ENCODE measurements at regions of chr14 and their contacts with region 1.

Region 1: GRCh38 chr14:26794731-26795130 is 196.9 kb upstream of the NOVA1 start:
- DNase-seq: no peak
- H3K4me3 ChIP-seq: no peak overlapping the region
- H3K27ac ChIP-seq: no peak overlapping the region
- H3K4me1 ChIP-seq: no peaks in the 10 kb centered on the region
- H3K27me3 ChIP-seq: no peaks in the 10 kb centered on the region
- CTCF ChIP-seq: no peak

Region 2: DNA sequence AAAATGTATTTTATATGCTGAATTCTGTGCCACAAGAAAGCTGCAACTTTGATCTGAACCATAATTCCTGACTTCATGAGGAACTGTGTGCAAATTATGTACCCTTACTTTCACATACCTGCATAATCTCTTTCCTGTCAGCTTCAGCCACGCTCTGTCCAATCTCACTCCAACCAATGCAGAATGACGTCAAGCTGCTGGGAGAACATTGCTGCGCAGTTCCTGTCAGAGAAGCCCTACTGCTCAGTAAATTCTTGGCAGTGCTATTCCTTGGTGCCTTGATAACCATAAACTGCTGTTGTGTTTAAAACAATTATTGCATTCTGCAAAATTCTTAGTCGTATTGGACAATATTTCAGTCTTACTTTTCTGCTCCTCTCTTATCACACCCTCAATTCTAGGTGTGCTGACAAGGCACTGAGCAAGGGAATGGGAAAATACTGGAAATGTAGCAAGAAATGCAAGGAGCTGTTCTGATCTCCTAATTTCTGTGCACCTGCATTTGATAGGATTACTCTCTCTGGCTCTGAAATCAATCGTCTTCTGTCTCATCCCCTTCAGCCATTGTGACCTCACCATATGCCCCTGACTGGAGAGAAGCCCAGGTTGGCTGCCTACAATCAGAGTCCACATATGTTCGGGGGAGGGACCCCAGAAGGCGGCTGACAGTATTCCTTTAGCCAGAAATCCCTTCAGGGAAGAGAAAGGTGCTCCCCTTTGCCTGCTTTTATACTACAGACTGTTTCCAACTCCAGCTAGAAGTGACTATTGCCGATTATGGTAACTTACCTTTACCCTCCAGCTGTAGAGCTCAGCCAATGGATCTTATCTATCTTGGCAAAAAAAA is 78.0 kb after region 1 on chr14:
- CTCF ChIA-PET with region 1: no interaction called
- dilution Hi-C with region 1: loop called (anchors 5 kb)
- in situ Hi-C with region 1: no loop called
- intact Hi-C with region 1: no loop called
- DNase-seq: no peak
- H3K4me3 ChIP-seq: no peak overlapping the region
- H3K27ac ChIP-seq: no peak overlapping the region
- H3K4me1 ChIP-seq: no peaks in the 10 kb centered on the region
- H3K27me3 ChIP-seq: no peaks in the 10 kb centered on the region
- CTCF ChIP-seq: no peak

Region 3: DNA sequence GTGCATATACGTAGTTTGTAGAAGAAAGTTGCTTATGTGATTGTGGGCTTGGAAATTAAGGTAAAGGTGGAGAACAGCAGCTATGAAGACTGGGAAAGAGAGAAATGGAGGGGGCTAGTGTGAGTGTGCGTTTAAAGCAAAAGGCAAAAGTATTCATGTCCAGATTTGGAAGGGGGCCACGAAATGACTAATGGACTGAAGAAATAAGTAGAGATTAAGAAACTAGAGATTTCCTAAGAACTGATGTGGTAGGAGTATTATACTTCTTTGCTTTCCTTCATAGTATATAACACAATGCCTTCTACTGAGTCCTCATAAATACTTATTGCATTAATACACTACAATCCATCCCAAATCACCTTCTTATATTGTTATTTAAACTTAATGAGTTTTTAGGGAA is 101.7 kb after region 1 on chr14:
- CTCF ChIA-PET with region 1: no interaction called
- dilution Hi-C with region 1: no loop called
- in situ Hi-C with region 1: no loop called
- intact Hi-C with region 1: no loop called
- DNase-seq: no peak
- H3K4me3 ChIP-seq: no peak overlapping the region
- H3K27ac ChIP-seq: no peak overlapping the region
- H3K4me1 ChIP-seq: no peaks in the 10 kb centered on the region
- H3K27me3 ChIP-seq: no peaks in the 10 kb centered on the region
- CTCF ChIP-seq: no peak

Measured in mammary epithelial cell (primary cell).